Activated naive CD4-positive, alpha-beta T cell treated with anti-CD3 and anti-CD28 coated beads, Interleukin-2, amount 10 ng/mL, durations not matched to agents 7 days and 5 days (primary cell): ENCODE measurements at regions of chr2 and their contacts with region 1.

Region 1: DNA sequence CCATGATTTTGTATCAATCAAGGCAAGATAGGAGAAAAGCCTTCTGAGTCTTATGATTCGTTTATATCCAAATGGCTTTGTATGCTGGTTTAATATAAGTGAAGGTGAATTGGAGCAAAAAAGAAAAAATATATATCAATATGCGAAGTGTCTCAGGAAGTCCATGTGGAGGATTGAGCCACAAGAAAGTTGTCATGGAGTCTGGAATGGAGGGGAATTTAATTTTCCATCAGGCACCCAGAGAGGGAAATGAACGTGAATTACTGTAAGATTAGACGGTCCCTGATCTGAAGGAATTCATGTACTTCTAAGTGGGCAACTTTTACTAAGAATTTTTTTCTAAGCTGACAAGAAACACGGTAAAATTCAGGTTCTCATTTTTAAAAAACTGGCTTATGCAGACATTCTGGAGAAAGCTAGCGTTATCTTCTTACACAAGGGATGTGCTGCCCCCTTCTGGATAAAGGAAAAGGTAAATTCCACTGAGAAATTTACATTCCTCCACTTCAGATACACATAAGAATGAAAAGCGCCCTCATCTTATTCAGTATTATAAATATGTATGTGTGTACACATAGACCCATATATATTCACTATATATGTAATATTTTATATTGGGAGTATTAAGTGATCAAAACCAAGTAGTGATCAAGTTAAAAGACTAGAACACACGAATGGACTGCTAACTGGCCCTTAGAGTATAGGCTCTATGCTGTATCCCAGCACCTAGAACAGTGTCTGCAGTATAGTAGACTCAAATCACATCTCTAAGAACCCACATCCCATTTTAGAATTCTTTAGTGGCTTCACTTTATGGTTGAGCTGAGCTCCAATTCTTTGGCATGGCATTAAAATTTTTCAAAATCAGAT is 289.0 kb upstream of the TFPI start:
- DNase-seq: no peak
- H3K4me3 Mint-ChIP-seq: no peak overlapping the region
- H3K27ac Mint-ChIP-seq: no peak overlapping the region
- H3K4me1 Mint-ChIP-seq: no peaks in the 10 kb centered on the region
- H3K27me3 Mint-ChIP-seq: no peaks in the 10 kb centered on the region

Region 2: GRCh38 chr2:187499941-187500532 is 343.2 kb before region 1 on chr2:
- CTCF ChIA-PET with region 1: interaction called, 21 read pairs
- DNase-seq: peak; percentile 57
- H3K4me3 Mint-ChIP-seq: no peak overlapping the region
- H3K27ac Mint-ChIP-seq: no peak overlapping the region
- H3K4me1 Mint-ChIP-seq: no peaks in the 10 kb centered on the region
- H3K27me3 Mint-ChIP-seq: no peaks in the 10 kb centered on the region

Region 3: GRCh38 chr2:187547353-187547979 is 295.7 kb before region 1 on chr2:
- CTCF ChIA-PET with region 1: no interaction called
- DNase-seq: no peak
- H3K4me3 Mint-ChIP-seq: no peak overlapping the region
- H3K27ac Mint-ChIP-seq: no peak overlapping the region
- H3K4me1 Mint-ChIP-seq: no peaks in the 10 kb centered on the region
- H3K27me3 Mint-ChIP-seq: peaks cover 4% of the 10 kb centered on the region

Region 4: DNA sequence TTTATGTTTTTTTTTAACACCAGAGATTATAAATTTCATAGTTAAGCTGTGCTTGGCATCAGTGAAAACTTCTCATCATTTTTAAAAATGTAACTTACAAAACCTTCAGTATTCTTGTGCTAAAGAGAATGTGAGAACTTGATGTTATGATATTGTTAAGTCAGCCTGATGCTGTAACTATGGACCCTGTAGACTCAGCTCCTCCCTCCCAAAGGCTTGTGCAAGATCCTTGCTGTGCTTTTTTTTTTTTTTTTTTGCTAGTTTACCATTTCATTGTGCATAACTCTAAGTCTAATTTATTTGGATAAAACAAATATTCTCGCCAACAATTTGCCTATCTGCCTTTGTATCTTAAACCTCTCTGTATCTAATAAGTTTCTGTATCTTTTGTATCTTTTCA is 276.1 kb before region 1 on chr2:
- CTCF ChIA-PET with region 1: no interaction called
- DNase-seq: no peak
- H3K4me3 Mint-ChIP-seq: no peak overlapping the region
- H3K27ac Mint-ChIP-seq: no peak overlapping the region
- H3K4me1 Mint-ChIP-seq: no peaks in the 10 kb centered on the region
- H3K27me3 Mint-ChIP-seq: no peaks in the 10 kb centered on the region

Region 5: GRCh38 chr2:187581125-187581896 is 261.9 kb before region 1 on chr2:
- CTCF ChIA-PET with region 1: interaction called, 10 read pairs
- DNase-seq: no peak
- H3K4me3 Mint-ChIP-seq: no peak overlapping the region
- H3K27ac Mint-ChIP-seq: no peak overlapping the region
- H3K4me1 Mint-ChIP-seq: peaks cover 6% of the 10 kb centered on the region
- H3K27me3 Mint-ChIP-seq: no peaks in the 10 kb centered on the region

Region 6: GRCh38 chr2:187826023-187826422 is 17.2 kb before region 1 on chr2:
- CTCF ChIA-PET with region 1: no interaction called
- DNase-seq: no peak
- H3K4me3 Mint-ChIP-seq: no peak overlapping the region
- H3K27ac Mint-ChIP-seq: no peak overlapping the region
- H3K4me1 Mint-ChIP-seq: no peaks in the 10 kb centered on the region
- H3K27me3 Mint-ChIP-seq: no peaks in the 10 kb centered on the region